Lower leg skin (tissue), 4 donors: ENCODE measurements at regions of chr5 and their contacts with region 1.

Region 1: DNA sequence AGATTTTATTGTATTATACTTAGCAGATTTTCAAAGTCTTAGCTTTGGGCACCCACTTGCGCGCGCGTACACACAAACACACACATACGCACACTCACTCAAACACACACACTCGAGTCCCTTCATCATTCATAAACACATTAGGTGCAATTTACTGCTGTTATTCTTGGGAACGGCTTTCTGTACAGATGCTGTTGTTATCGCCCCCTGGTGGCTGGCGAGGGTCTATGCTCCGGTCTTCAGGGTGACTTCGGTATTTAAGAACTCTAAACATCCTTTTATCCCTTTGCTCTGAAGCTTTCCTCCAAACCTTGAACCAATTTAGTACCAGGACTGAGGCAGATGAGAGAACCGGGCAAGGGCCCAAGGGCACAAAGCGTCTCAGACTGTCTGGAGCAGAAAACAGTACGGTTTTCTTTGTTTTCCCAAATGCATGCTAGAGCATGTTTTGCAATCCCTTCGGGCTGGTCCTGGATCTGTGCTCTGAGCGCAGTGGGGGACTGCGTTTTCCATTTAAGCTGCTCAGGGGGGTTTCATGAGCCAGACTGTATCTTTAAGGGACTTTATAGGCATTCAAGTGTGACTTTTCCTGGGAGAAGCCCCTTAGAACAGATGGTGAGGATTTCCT is 1.7 kb upstream of the SLIT3 start:
- DNase-seq: peak; percentile 72 to 95
- H3K4me3 ChIP-seq: no peak overlapping the region
- CTCF ChIP-seq: peak in 1 of 3 donors; percentile 88
- POLR2A ChIP-seq: no peak

Region 2: DNA sequence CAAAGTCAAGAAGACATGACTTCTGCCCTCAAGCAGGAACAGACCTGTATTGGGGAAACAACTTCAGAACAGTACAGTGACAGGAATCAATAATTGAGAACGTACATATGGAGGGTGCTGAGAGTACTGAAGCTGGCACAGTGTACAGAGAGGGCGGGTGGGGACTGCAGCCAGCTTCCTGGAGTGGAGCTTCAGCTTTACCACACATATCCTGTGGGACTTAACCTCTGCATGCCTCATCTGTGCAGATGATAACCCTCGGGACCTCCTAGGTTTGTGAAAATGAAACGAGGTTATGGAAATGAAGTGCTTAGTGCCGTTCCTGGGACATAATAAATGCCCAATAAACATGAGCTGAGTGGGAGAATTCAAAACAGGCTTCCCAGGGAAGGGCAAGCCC is 838.4 kb before region 1 on chr5:
- intact Hi-C with region 1: loop called (anchors 2 kb)
- DNase-seq: no peak
- H3K4me3 ChIP-seq: no peak overlapping the region
- CTCF ChIP-seq: no peak
- POLR2A ChIP-seq: no peak

Region 3: GRCh38 chr5:168698991-168699401 is 603.6 kb before region 1 on chr5:
- intact Hi-C with region 1: loop called (anchors 10 kb)
- DNase-seq: no peak
- H3K4me3 ChIP-seq: no peak overlapping the region
- CTCF ChIP-seq: no peak
- POLR2A ChIP-seq: no peak

Region 4: GRCh38 chr5:169149317-169149716 is 153.3 kb before region 1 on chr5:
- intact Hi-C with region 1: no loop called
- DNase-seq: peak in 1 of 2 donors; percentile 26
- H3K4me3 ChIP-seq: no peak overlapping the region
- CTCF ChIP-seq: no peak
- POLR2A ChIP-seq: no peak